ENCODE measurements at regions of chr3 and their contacts with region 1.

Region 1: GRCh38 chr3:140128631-140129030 is 193.6 kb downstream of the CLSTN2 start:
- DNase-seq: peak; percentile 56
- H3K4me3 Mint-ChIP-seq: no peak overlapping the region
- H3K27ac Mint-ChIP-seq: no peak overlapping the region
- H3K4me1 Mint-ChIP-seq: no peaks in the 10 kb centered on the region
- H3K27me3 Mint-ChIP-seq: no peaks in the 10 kb centered on the region
- CTCF ChIP-seq: peak; percentile 26

Region 2: GRCh38 chr3:140113996-140114788 is 14.4 kb before region 1 on chr3:
- CTCF ChIA-PET with region 1: interaction called, 14 read pairs
- POLR2A ChIA-PET with region 1: no interaction called
- intact Hi-C with region 1: no loop called
- DNase-seq: no peak
- H3K4me3 Mint-ChIP-seq: no peak overlapping the region
- H3K27ac Mint-ChIP-seq: no peak overlapping the region
- H3K4me1 Mint-ChIP-seq: no peaks in the 10 kb centered on the region
- H3K27me3 Mint-ChIP-seq: no peaks in the 10 kb centered on the region
- CTCF ChIP-seq: no peak

Region 3: DNA sequence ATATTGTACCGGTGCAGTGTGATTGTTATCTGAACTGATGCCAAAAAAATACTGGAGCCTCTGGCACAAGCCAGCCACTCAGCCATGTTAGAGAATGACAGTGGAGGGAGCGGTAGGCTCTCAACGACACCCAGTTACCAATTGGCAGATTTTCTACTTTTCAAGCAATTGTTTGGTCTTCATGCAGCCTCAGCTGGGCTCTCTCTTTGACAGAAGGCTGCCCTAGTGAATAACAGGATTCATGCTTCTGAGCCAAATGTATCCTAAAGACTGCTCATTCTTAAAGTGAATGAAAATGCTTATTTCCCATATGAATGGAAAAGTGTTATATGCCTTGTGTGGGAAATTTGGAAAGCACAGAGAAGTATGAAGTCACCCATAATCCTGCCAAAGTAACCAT is 288.0 kb after region 1 on chr3:
- CTCF ChIA-PET with region 1: no interaction called
- POLR2A ChIA-PET with region 1: no interaction called
- intact Hi-C with region 1: no loop called
- DNase-seq: no peak
- H3K4me3 Mint-ChIP-seq: no peak overlapping the region
- H3K27ac Mint-ChIP-seq: no peak overlapping the region
- H3K4me1 Mint-ChIP-seq: peaks cover 3% of the 10 kb centered on the region
- H3K27me3 Mint-ChIP-seq: no peaks in the 10 kb centered on the region
- CTCF ChIP-seq: no peak

Region 4: DNA sequence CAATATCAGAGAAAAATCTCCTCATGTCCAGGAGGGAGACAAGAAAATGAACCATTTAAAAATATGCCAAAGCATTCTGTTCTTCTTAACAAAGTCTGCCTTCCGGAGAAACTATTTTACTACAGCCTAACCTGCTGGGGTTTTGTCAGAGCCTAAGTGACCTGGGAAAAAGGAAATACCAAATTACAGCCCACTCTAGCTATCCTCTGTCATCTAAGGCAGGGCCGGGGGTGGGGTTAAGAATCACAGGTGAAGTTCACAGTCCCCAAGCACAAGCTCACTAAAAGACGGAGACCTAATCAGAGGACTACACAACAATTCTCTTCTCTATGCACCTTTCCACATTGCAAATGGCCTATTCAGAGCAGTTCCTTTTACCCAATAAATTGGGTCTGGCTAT is 665.9 kb after region 1 on chr3:
- CTCF ChIA-PET with region 1: no interaction called
- POLR2A ChIA-PET with region 1: no interaction called
- intact Hi-C with region 1: no loop called
- DNase-seq: no peak
- H3K4me3 Mint-ChIP-seq: no peak overlapping the region
- H3K27ac Mint-ChIP-seq: no peak overlapping the region
- H3K4me1 Mint-ChIP-seq: no peaks in the 10 kb centered on the region
- H3K27me3 Mint-ChIP-seq: peaks cover 33% of the 10 kb centered on the region
- CTCF ChIP-seq: no peak

Region 5: DNA sequence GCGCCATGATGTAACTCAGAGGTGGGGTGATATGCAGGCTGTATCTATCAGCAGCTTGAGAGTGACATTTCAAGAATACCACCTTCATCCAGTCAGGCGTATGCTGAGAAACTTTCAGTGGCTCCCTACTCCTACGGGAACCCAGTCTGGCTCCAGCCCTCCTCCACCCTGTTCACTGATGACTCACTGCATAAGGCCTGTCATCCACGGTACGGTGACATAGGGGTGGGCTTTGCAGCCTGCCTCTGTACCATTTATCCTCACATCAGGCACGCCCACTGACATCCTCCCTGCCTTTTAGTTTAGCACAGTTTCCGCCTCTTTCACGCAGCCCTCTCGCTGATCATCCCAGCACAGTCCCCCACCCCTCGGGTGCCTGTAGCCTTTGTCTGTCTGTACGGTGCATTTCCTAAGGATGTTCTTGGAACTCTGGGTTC is 1114.7 kb after region 1 on chr3:
- CTCF ChIA-PET with region 1: no interaction called
- POLR2A ChIA-PET with region 1: no interaction called
- intact Hi-C with region 1: no loop called
- DNase-seq: peak; percentile 17
- H3K4me3 Mint-ChIP-seq: no peak overlapping the region
- H3K27ac Mint-ChIP-seq: peak overlapping the region; percentile 53
- H3K4me1 Mint-ChIP-seq: peaks cover 18% of the 10 kb centered on the region
- H3K27me3 Mint-ChIP-seq: no peaks in the 10 kb centered on the region
- CTCF ChIP-seq: no peak

Measured in MCF 10A (cell line).